ENCODE measurements at regions of chr1 and their contacts with region 1.

Region 1: DNA sequence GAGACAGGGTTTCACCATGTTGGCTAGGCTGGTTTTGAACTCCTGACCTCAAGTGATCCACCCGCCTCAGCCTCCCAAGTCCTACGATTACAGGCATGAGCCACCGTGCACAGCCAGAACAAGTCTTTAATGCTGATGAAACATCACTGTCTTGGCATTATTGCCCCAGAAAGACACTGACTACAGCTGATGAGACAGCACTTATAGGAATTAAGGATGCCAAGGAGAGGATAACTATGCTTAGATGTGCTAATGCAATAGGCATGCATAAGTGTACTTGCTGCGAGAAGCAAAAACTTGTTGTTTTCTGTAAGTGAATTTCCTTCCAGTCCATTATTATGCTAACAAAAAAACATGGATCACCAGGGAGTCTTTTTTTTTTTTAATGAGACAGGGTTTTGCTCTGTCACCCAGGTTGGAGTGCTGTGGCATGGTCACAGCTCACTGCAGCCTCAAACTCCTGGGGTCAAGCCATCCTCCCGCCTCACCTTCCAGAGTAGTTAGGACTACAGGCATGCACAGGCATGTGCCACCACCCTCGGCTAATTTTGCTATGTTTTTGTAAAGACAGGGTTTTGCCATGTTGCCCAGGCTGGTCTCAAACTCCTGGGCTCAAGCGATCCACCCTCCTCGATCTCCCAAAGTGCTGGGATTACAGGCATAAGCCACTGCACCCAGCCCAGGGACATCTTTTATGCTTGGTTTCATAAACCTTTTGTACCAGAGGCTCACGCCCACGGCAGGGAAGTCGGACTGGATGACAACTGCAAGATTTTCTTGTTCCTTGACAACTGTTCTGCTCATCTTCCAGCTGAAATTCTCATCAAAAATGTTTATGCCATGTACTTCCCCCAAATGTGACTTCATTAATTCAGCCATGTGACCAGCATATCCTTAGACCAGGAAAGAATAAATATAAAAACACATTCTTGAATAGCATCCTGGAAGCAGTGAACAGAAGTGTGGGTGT is 23.1 kb downstream of the RHEX start:
- DNase-seq: no peak
- ATAC-seq: no peak

Region 2: GRCh38 chr1:206050655-206051235 is 25.3 kb before region 1 on chr1:
- intact Hi-C with region 1: loop called (anchors 1 kb)
- DNase-seq: no peak
- ATAC-seq: peak; percentile 44

Measured in sciatic nerve (tissue), 2 donors.